OCI-LY7 (cell line): ENCODE measurements at regions of chr5 and their contacts with region 1.

Region 1: GRCh38 chr5:181159286-181159829 is 12.0 kb downstream of the OR2V2 start:
- DNase-seq: peak; percentile 84
- H3K4me3 ChIP-seq: no peak overlapping the region
- H3K27ac ChIP-seq: peak overlapping the region; percentile 80
- H3K4me1 ChIP-seq: peaks cover 38% of the 10 kb centered on the region
- CTCF ChIP-seq: peak; percentile 95

Region 2: DNA sequence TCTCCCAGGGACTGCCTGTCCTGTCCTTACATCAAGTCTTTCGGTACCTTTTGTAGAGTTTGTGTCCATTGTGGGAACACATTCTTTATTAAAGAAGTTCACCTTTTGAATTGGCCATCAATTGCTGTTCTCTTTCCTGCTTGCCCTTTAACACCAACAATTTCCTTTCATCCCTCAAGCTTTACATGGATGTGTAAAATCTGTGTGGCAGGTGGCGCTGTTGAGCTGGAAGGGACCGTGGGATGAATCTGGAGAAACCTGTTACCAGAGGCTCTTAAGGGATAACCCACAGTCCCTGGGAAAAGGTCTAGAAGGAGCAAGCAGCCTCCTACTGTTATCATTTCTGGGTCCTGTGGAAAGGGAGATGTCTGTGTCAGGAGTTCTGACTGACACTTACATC is 290.4 kb before region 1 on chr5:
- CTCF ChIA-PET with region 1: no interaction called
- POLR2A ChIA-PET with region 1: no interaction called
- intact Hi-C with region 1: loop called (anchors 1 kb)
- DNase-seq: peak; percentile 78
- H3K4me3 ChIP-seq: no peak overlapping the region
- H3K27ac ChIP-seq: no peak overlapping the region
- H3K4me1 ChIP-seq: peaks cover 15% of the 10 kb centered on the region
- CTCF ChIP-seq: peak; percentile 97

Region 3: GRCh38 chr5:181043285-181044092 is 115.9 kb before region 1 on chr5:
- CTCF ChIA-PET with region 1: interaction called, 3 read pairs
- POLR2A ChIA-PET with region 1: no interaction called
- intact Hi-C with region 1: loop called (anchors 1 kb)
- DNase-seq: peak; percentile 67
- H3K4me3 ChIP-seq: peak overlapping the region; percentile 64
- H3K27ac ChIP-seq: peak overlapping the region; percentile 84
- H3K4me1 ChIP-seq: peaks cover 53% of the 10 kb centered on the region
- CTCF ChIP-seq: peak; percentile 75

Region 4: GRCh38 chr5:181184857-181185251 is 25.5 kb after region 1 on chr5:
- CTCF ChIA-PET with region 1: interaction called, 3 read pairs
- POLR2A ChIA-PET with region 1: interaction called, 4 read pairs
- intact Hi-C with region 1: loop called (anchors 1 kb)
- DNase-seq: no peak
- H3K4me3 ChIP-seq: peak overlapping the region; percentile 70
- H3K27ac ChIP-seq: peak overlapping the region; percentile 70
- H3K4me1 ChIP-seq: peaks cover 38% of the 10 kb centered on the region
- CTCF ChIP-seq: no peak